Right lobe of liver (tissue), 6 donors: ENCODE measurements at regions of chr20 and their contacts with region 1.

Region 1: GRCh38 chr20:57654363-57654997 is 34.3 kb upstream of the ZBP1 start:
- DNase-seq: peak; percentile 31 to 56 (median 50)
- ATAC-seq: peak; percentile 69 to 87 (median 84)
- H3K4me3 ChIP-seq: no peak overlapping the region
- H3K27ac ChIP-seq: no peak overlapping the region
- H3K4me1 ChIP-seq: no peaks in the 10 kb centered on the region
- H3K27me3 ChIP-seq: no peaks in the 10 kb centered on the region
- CTCF ChIP-seq: peak; percentile 85 to 90 (median 86)
- POLR2A ChIP-seq: no peak

Region 2: DNA sequence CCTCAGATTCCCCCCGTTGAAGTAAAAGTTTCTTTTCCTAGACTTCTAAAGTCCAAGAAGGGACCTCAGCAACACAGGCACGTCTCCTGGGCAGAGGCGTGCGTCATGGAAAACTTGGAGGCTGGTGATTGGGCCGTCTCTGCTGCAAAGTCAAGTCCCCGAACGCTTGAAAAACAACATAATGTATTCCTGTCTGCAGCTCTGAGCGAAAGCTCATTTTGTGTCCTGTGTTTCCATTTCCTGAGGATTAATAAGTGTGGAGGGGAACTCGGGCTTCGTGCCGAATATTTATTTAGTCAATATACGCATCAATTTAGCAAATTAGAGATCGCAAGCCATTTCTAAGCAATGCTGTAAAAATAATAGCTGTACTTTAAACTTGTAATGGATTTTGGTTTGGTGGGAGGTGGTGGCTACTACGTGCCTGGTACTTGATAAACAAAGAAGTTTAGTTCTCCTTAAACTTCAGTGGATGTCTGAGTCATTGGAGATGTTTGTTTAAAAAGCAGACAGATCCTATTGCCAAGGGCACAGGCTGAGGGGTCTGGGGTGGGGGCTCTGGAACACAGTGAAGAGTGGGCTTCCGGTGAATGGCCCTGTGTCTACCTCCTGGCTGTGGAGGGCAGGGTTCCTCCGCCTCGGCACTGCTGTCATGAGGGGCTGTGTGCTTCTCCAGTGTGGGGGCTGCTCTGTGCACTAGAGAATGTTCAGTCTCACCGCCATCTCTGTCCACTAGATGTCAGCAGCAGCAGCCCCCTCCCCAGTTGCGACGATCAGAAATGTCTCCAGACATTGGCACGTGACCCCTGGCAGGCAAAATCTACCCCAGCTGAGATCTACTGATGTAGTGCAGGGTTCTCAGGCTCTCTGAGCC is 71.8 kb before region 1 on chr20:
- intact Hi-C with region 1: no loop called
- DNase-seq: no peak
- ATAC-seq: no peak
- H3K4me3 ChIP-seq: no peak overlapping the region
- H3K27ac ChIP-seq: peak overlapping the region in 2 of 3 donors; percentile 26 to 47
- H3K4me1 ChIP-seq: peaks cover 0 to 62% (median 20%) of the 10 kb centered on the region in 4 donors
- H3K27me3 ChIP-seq: no peaks in the 10 kb centered on the region
- CTCF ChIP-seq: peak; percentile 14 to 30 (median 24)
- POLR2A ChIP-seq: no peak

Region 3: DNA sequence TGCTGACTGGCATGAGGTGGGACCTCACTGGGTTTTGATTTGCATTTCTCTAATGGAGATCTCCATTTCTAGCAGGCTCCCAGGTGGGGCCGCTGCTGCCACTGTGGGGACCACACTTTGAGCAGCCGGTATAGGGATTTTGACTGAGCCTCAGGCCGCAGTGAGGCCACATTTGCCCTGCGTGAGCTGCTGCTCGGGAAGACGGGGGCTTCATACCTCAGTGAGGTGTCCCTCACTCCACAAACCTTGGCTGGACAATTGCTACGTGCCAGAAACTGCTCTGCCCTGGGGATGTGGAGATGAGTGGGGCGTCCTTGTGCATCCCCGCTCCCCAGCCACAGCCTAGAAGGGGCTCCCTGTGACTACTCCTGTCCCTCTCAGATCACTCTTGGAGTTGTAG is 439.7 kb after region 1 on chr20:
- intact Hi-C with region 1: loop called in 1 of 2 experiments (anchors 10 kb)
- DNase-seq: no peak
- ATAC-seq: peak in 1 of 4 donors; percentile 21
- H3K4me3 ChIP-seq: no peak overlapping the region
- H3K27ac ChIP-seq: no peak overlapping the region
- H3K4me1 ChIP-seq: no peaks in the 10 kb centered on the region
- H3K27me3 ChIP-seq: no peaks in the 10 kb centered on the region
- CTCF ChIP-seq: no peak
- POLR2A ChIP-seq: no peak

Region 4: DNA sequence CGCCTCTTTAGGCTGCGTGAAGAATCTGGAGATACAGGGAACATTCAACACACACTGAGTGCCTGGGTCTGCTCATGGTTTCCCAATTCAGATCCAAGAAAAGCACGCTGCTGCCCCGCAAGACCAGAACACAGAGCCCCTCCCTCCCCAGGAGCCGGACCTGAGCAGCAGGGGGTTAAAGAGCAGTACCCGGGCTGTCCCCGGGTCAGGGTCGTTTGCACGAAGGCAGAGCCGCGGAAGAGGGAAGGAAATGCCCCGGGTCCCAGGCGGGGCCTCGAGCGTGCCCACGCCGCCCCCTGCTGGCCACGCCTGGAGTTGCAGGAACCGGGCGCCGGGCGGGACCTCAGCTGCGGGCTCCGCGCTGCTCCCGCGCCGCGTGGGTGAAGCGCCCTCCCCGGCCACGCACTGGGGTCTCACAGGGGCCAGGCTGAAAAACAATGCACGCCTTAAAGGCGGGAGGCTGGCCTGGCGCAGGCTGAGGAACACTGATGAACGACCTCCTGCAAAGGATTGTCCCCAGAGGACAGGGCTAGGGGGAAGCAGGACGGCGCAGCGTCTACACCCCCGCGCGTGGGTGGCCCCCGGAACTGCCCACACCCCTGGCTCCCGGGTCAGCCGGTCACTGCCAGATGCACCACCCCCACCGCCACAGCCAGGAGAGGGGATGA is 525.1 kb after region 1 on chr20:
- intact Hi-C with region 1: loop called in 1 of 2 experiments (anchors 5 kb)
- DNase-seq: peak; percentile 43 to 66 (median 63)
- ATAC-seq: peak; percentile 77 to 93 (median 88)
- H3K4me3 ChIP-seq: peak overlapping the region in 1 of 3 donors; percentile 13
- H3K27ac ChIP-seq: no peak overlapping the region
- H3K4me1 ChIP-seq: peaks cover 0 to 7% (median 0%) of the 10 kb centered on the region in 4 donors
- H3K27me3 ChIP-seq: peaks cover 0 to 4% of the 10 kb centered on the region in 2 donors
- CTCF ChIP-seq: peak; percentile 92 to 99 (median 98)
- POLR2A ChIP-seq: no peak